PC-9 (cell line): ENCODE measurements at regions of chr5 and their contacts with region 1.

Region 1: GRCh38 chr5:132704875-132705274 is 31.1 kb downstream of the IL4 start:
- DNase-seq: no peak
- H3K4me3 ChIP-seq: no peak overlapping the region
- H3K27ac ChIP-seq: no peak overlapping the region
- H3K4me1 ChIP-seq: no peaks in the 10 kb centered on the region
- H3K27me3 ChIP-seq: no peaks in the 10 kb centered on the region
- CTCF ChIP-seq: no peak

Region 2: DNA sequence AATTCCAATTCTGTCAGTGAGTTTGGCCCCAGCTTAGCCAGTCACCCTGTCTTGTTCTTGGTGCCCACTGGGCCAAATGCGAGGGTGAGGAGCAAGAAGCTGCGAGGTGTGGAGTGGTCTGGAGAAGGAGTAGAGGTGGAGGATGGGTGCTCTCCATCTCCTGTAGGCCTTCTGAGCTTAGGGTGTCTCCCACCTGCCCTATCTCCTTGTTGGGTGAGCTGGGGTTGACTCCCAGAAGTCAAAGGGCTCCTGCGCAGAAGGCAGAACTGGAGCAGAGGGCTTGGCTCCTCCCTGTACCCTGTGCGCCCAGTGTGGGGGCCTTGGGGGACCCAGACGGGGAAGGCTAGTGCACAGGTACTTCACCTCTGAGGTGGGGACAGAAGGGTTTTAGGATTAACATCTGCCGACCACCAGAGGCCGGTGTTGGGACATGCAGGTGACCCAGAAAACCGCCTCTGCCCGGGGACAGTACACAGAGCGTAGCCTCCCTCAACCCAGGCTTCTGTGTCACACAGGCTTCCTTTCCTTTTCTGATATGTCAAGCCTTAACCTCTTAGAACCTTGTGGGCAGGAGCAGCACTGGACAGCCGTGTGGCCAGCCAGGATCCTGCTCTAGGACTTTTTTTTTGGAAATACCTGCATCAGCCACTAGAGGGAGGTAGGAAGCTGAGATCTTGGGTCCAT is 178.4 kb before region 1 on chr5:
- CTCF ChIA-PET with region 1: no interaction called
- POLR2A ChIA-PET with region 1: no interaction called
- intact Hi-C with region 1: loop called (anchors 10 kb)
- DNase-seq: peak; percentile 52 to 63
- H3K4me3 ChIP-seq: no peak overlapping the region
- H3K27ac ChIP-seq: no peak overlapping the region
- H3K4me1 ChIP-seq: no peaks in the 10 kb centered on the region
- H3K27me3 ChIP-seq: no peaks in the 10 kb centered on the region
- CTCF ChIP-seq: peak; percentile 97

Region 3: GRCh38 chr5:132591145-132591544 is 113.7 kb before region 1 on chr5:
- CTCF ChIA-PET with region 1: interaction called, 18 read pairs
- POLR2A ChIA-PET with region 1: no interaction called
- intact Hi-C with region 1: no loop called
- DNase-seq: no peak
- H3K4me3 ChIP-seq: no peak overlapping the region
- H3K27ac ChIP-seq: no peak overlapping the region
- H3K4me1 ChIP-seq: no peaks in the 10 kb centered on the region
- H3K27me3 ChIP-seq: no peaks in the 10 kb centered on the region
- CTCF ChIP-seq: no peak

Region 4: GRCh38 chr5:132629230-132629944 is 75.5 kb before region 1 on chr5:
- CTCF ChIA-PET with region 1: no interaction called
- POLR2A ChIA-PET with region 1: no interaction called
- intact Hi-C with region 1: loop called (anchors 10 kb)
- DNase-seq: no peak
- H3K4me3 ChIP-seq: no peak overlapping the region
- H3K27ac ChIP-seq: no peak overlapping the region
- H3K4me1 ChIP-seq: no peaks in the 10 kb centered on the region
- H3K27me3 ChIP-seq: no peaks in the 10 kb centered on the region
- CTCF ChIP-seq: no peak

Region 5: DNA sequence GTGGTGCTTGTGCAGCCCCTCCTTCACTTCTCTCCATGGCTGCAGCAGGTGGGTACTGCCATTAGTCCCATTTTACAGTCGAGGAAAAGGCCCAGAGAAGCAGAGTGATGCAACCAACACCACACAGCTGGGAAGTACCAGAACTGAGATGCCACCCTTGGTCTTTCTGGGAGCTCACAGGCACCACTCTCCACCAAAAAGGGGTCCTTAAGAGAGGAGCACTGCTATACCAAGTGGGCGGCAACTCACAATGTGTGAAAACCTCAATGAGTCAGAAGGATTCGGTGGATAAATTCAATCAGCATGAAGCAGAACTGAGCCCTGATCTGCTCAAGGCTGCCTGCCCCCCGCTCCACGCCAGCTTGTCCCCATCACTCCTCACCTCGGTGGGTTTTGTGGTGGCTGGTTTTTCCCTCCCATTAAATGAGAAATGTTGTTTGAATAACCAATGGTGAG is 693.8 kb after region 1 on chr5:
- CTCF ChIA-PET with region 1: no interaction called
- POLR2A ChIA-PET with region 1: no interaction called
- intact Hi-C with region 1: no loop called
- DNase-seq: no peak
- H3K4me3 ChIP-seq: no peak overlapping the region
- H3K27ac ChIP-seq: no peak overlapping the region
- H3K4me1 ChIP-seq: no peaks in the 10 kb centered on the region
- H3K27me3 ChIP-seq: no peaks in the 10 kb centered on the region
- CTCF ChIP-seq: no peak